Spleen (tissue), 13 donors: ENCODE measurements at regions of chrX and their contacts with region 1.

Region 1: DNA sequence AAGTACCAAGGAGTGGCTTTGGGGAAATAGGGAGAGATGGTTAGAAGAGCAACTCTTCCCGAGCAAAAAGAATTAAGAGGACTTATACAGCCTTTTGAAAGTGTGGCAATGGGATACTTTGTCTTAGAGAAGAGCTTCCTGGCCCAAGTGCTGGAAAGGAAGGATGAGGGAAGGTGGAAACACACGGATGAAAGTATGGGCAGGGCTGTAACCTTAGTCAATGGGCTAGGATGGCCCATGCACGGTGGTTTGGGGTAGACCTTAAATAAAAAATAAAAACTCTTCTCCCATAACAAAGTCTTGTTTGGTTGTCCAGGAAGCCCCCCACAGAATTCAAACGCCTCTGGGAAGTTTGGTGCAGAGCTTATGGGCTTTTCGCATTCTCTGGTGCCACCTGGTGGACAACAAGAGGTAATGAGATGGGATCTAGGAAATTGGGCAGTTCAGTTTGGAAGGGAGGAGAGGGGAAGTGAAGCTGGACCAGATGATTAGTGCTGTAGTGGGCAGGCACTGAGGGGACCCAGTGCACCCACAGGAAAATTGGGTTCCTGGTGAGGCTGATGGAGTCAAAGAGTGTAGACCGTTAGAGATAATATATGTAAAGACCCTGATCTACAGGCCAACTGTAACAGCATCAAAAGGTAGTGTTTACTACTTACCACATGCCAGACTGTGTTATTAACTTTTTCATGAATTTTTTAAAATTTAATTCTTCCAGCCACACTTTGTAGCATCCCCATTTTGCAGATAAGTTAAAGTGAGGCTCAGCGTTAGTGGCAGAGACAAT is 13.8 kb upstream of the ENOX2 start:
- DNase-seq: no peak
- H3K4me3 ChIP-seq: no peak overlapping the region
- H3K27ac ChIP-seq: no peak overlapping the region
- H3K4me1 ChIP-seq: no peaks in the 10 kb centered on the region
- H3K27me3 ChIP-seq: no peaks in the 10 kb centered on the region
- CTCF ChIP-seq: peak in 10 of 11 experiments; percentile 45 to 81 (median 70)
- POLR2A ChIP-seq: no peak

Region 2: DNA sequence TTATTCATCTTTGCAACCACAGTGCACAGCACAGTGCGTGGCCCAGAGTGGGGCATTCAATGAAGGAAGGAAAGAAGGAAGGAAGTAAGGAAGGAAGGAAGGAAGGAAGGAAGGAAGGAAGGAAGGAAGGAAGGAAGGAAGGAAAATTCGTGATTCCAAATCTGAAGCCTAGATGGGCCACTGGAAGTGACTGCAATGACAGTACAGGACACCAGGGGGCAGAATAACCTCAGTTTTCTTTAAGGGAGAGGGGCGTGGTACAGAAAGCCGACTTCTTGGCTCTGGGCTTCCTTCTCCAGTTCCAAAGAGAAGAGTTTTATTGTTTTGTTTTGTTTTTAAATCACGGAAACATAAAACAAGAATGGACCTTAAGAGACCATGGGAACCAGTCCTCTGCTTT is 1309.9 kb before region 1 on chrX:
- intact Hi-C with region 1: loop called (anchors 10 kb)
- DNase-seq: no peak
- H3K4me3 ChIP-seq: no peak overlapping the region
- H3K27ac ChIP-seq: no peak overlapping the region
- H3K4me1 ChIP-seq: peaks cover 3 to 30% (median 11%) of the 10 kb centered on the region in 6 donors
- H3K27me3 ChIP-seq: peaks cover 0 to 10% (median 0%) of the 10 kb centered on the region in 7 donors
- CTCF ChIP-seq: peak; percentile 60 to 96 (median 82)
- POLR2A ChIP-seq: no peak

Region 3: DNA sequence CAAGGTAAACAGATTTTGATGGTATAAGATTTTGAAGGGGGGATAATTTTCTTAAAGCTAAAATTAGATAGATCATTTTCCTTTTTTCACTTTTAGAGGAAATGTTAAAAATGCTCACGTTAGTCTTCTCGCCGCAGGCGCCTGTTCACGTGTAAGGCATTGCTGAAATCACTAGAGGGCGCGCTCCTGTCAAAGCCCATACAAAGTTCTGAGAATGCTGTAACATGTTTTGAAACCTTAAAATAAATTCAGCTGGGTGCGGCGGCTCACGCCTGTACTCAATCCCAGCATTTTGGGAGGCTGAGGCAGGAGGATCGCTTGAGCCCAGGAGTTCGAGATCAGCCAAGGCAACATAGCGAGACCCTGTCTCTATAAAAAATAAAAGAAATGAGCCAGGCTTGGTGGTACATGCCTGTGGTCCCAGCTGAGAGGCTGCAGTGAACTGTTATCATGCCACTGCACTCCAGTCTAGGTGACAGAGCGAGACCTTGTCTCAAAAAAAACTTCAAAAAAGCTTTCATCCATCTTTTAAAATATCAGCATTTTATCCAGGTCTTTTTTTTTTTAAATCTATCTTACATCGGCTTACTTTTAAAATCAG is 377.0 kb before region 1 on chrX:
- intact Hi-C with region 1: loop called (anchors 10 kb)
- DNase-seq: no peak
- H3K4me3 ChIP-seq: no peak overlapping the region
- H3K27ac ChIP-seq: no peak overlapping the region
- H3K4me1 ChIP-seq: no peaks in the 10 kb centered on the region
- H3K27me3 ChIP-seq: peaks cover 0 to 14% (median 0%) of the 10 kb centered on the region in 7 donors
- CTCF ChIP-seq: peak in 9 of 11 experiments; percentile 30 to 72 (median 58)
- POLR2A ChIP-seq: no peak

Region 4: GRCh38 chrX:130575831-130576389 is 340.9 kb before region 1 on chrX:
- intact Hi-C with region 1: loop called (anchors 10 kb)
- DNase-seq: no peak
- H3K4me3 ChIP-seq: no peak overlapping the region
- H3K27ac ChIP-seq: no peak overlapping the region
- H3K4me1 ChIP-seq: no peaks in the 10 kb centered on the region
- H3K27me3 ChIP-seq: peaks cover 0 to 8% (median 0%) of the 10 kb centered on the region in 7 donors
- CTCF ChIP-seq: peak in 9 of 11 experiments; percentile 19 to 59 (median 36)
- POLR2A ChIP-seq: no peak